ENCODE measurements at regions of chr22 and their contacts with region 1.

Region 1: GRCh38 chr22:19808883-19809478 is 45.7 kb downstream of the GNB1L start:
- DNase-seq: peak; percentile 34

Region 2: GRCh38 chr22:19832476-19833108 is 23.6 kb after region 1 on chr22:
- intact Hi-C with region 1: loop called in 1 of 2 experiments (anchors 1 kb)
- DNase-seq: no peak

Measured in posterior vena cava (tissue), 2 donors.